Gastrocnemius medialis (tissue), 4 donors: ENCODE measurements at regions of chr15 and their contacts with region 1.

Region 1: GRCh38 chr15:56496635-56497034 is 31.7 kb upstream of the MNS1 start:
- DNase-seq: no peak
- ATAC-seq: peak; percentile 65 to 78
- H3K4me3 ChIP-seq: peak overlapping the region in 1 of 4 donors; percentile 5
- H3K27ac ChIP-seq: no peak overlapping the region
- H3K4me1 ChIP-seq: no peaks in the 10 kb centered on the region
- H3K27me3 ChIP-seq: no peaks in the 10 kb centered on the region
- CTCF ChIP-seq: peak; percentile 26 to 72 (median 57)
- POLR2A ChIP-seq: no peak

Region 2: DNA sequence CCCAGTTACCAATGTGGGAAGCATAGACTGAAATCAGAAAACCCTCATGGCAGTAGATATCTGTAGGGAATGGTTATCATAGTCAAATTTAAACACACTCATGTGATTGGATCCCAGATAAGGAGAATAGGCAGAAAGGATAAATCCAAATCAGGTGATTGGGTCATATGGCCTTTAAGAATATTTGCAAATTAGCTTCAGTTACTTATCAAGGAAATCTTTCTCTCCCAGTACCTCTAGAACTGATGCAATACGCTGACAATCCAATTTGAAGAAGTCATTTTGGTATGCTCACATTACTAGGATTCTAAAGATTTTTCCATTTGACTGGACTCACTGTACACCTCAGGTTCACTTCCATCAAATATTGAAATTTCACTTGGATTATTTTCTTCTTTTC is 56.0 kb after region 1 on chr15:
- in situ Hi-C with region 1: no loop called
- intact Hi-C with region 1: no loop called
- DNase-seq: no peak
- ATAC-seq: no peak
- H3K4me3 ChIP-seq: no peak overlapping the region
- H3K27ac ChIP-seq: no peak overlapping the region
- H3K4me1 ChIP-seq: no peaks in the 10 kb centered on the region
- H3K27me3 ChIP-seq: no peaks in the 10 kb centered on the region
- CTCF ChIP-seq: no peak
- POLR2A ChIP-seq: no peak

Region 3: DNA sequence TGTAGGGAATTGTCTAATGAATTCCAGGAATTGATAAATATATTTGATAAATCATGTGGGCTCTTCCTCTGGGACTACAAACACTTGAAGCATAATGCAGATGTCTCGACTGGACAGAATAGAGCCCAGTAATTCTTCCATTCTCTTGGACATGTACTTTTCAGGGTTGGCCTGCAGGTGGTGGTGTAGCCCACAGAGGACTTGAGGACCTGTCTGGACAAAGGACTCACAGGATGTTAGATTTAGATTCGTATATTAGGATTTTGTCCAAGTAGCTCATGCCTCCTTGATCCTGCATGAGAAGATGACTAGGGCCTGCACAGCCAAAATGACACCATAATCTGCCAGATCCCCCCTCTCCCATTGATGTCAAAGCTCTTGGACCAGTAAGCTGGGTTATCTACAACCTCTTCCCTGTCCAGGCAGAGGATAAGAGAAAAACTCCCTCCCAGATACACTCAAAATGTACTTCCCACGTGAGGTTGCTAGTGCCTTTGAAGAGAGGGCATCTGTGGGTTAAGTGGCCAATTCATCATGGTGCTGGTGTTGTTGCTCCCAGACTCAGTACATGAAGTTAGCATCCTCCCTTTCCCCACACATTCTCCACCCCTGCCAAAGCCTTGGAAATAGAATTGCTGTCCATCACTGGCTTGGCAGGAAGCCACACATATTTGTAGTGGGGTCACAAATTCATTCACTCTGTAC is 325.2 kb after region 1 on chr15:
- in situ Hi-C with region 1: no loop called
- intact Hi-C with region 1: loop called (anchors 5 kb)
- DNase-seq: peak in 1 of 2 donors; percentile 55
- ATAC-seq: peak; percentile 65 to 84
- H3K4me3 ChIP-seq: no peak overlapping the region
- H3K27ac ChIP-seq: no peak overlapping the region
- H3K4me1 ChIP-seq: peaks cover 12 to 23% of the 10 kb centered on the region in 2 donors
- H3K27me3 ChIP-seq: no peaks in the 10 kb centered on the region
- CTCF ChIP-seq: peak; percentile 54 to 75 (median 69)
- POLR2A ChIP-seq: no peak

Region 4: GRCh38 chr15:56869573-56869972 is 372.9 kb after region 1 on chr15:
- in situ Hi-C with region 1: loop called (anchors 5 to 10 kb)
- intact Hi-C with region 1: loop called (anchors 1 kb)
- DNase-seq: peak in 1 of 2 donors; percentile 35
- ATAC-seq: peak; percentile 46 to 58
- H3K4me3 ChIP-seq: no peak overlapping the region
- H3K27ac ChIP-seq: no peak overlapping the region
- H3K4me1 ChIP-seq: peaks cover 0 to 8% of the 10 kb centered on the region in 2 donors
- H3K27me3 ChIP-seq: no peaks in the 10 kb centered on the region
- CTCF ChIP-seq: peak; percentile 58 to 79 (median 70)
- POLR2A ChIP-seq: no peak

Region 5: GRCh38 chr15:57138349-57138788 is 641.7 kb after region 1 on chr15:
- in situ Hi-C with region 1: no loop called
- intact Hi-C with region 1: loop called (anchors 5 kb)
- DNase-seq: no peak
- ATAC-seq: peak; percentile 47 to 72
- H3K4me3 ChIP-seq: no peak overlapping the region
- H3K27ac ChIP-seq: no peak overlapping the region
- H3K4me1 ChIP-seq: peaks cover 22 to 25% of the 10 kb centered on the region in 2 donors
- H3K27me3 ChIP-seq: no peaks in the 10 kb centered on the region
- CTCF ChIP-seq: peak; percentile 43 to 75 (median 63)
- POLR2A ChIP-seq: no peak